HCT116 (cell line): ENCODE measurements at regions of chr16 and their contacts with region 1.

Region 1: GRCh38 chr16:69105489-69106361 is at the start of gene HAS3:
- DNase-seq: peak; percentile 69
- ATAC-seq: peak; percentile 72
- H3K4me3 ChIP-seq: peak within 1 kb of the TSS; percentile 81 to 90
- H3K27ac ChIP-seq: peak within 1 kb of the TSS; percentile 74
- H3K4me1 ChIP-seq: peaks cover 24 to 66% of the 10 kb centered on the region in 2 experiments
- H3K27me3 ChIP-seq: no peaks in the 10 kb centered on the region
- CTCF ChIP-seq: peak; percentile 35 to 88 (median 59); a peak in 5 of 6 replicates
- POLR2A ChIP-seq: no peak
- RAD21 ChIP-seq: peak; percentile 96
- total RNA-seq, gene HAS3: 140 TPM

Region 2: DNA sequence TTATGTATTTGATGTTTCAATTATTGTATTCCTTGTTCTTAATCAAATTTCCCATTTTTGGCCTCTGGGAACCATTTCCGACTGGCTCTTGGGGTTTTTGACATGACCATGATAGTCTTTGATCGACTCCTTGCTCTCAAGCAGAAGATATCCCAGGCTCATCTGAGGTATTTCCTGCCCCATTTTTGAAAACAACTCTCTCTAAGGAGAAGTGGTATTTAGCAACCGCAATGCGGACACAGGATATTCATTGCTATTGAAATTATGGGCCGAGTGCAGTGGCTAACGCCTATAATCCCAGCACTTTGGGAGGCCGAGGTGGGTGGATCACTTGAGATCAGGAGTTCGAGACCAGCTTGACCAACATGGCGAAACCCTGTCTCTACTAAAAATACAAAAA is 256.9 kb before region 1 on chr16:
- CTCF ChIA-PET with region 1: interaction called, 14 read pairs
- POLR2A ChIA-PET with region 1: no interaction called
- RAD21 ChIA-PET with region 1: no interaction called
- intact Hi-C with region 1: loop called (anchors 5 kb)
- DNase-seq: no peak
- ATAC-seq: no peak
- H3K4me3 ChIP-seq: no peak overlapping the region
- H3K27ac ChIP-seq: no peak overlapping the region
- H3K4me1 ChIP-seq: peaks cover 2 to 8% of the 10 kb centered on the region in 2 experiments; a peak in 2 of 4 replicates
- H3K27me3 ChIP-seq: no peaks in the 10 kb centered on the region
- CTCF ChIP-seq: no peak
- POLR2A ChIP-seq: no peak
- RAD21 ChIP-seq: no peak

Region 3: DNA sequence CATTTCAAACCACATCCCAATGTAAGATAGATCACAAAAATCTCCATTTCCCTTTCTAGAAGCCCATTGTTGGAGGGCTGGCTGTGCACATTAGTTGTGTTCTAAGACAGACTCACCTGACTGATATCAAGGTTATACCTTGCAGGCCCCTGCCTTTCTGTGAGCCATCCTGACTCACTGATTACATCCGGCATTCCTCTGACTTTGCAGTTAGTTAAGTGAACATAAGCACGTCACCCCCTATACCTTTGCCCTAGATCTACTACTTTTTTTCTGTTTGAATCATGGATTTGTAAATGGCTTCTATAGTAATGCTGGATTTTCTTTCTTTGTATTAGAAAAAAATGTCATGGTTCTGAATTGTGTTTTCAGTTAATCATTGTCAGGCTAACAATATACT is 184.1 kb before region 1 on chr16:
- CTCF ChIA-PET with region 1: no interaction called
- POLR2A ChIA-PET with region 1: interaction called, 5 read pairs
- RAD21 ChIA-PET with region 1: no interaction called
- intact Hi-C with region 1: loop called (anchors 5 kb)
- DNase-seq: peak; percentile 98
- ATAC-seq: peak; percentile 86
- H3K4me3 ChIP-seq: peak overlapping the region in 1 of 2 experiments; percentile 37; a peak in 1 of 4 replicates
- H3K27ac ChIP-seq: peak overlapping the region; percentile 89
- H3K4me1 ChIP-seq: peaks cover 42 to 61% of the 10 kb centered on the region in 2 experiments
- H3K27me3 ChIP-seq: no peaks in the 10 kb centered on the region
- CTCF ChIP-seq: no peak
- POLR2A ChIP-seq: no peak
- RAD21 ChIP-seq: peak; percentile 38

Region 4: DNA sequence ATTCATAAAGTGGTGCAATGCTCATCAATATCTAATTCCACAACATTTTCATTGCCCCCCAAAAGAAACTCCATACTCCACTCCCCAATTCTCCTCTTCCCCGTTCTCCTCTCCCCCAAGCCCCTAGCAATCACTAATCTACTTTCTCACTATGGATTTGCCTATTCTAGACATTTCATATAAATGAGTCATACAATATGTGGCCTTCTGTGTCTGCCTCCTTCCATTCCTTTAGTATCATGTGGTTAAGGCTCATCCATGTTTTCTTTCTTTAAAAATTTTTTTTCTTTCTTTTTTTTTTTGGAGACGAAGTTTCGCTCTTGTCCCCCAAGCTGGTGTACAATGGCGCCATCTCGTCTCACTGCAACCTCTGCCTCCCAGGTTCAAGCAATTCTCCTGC is 56.6 kb before region 1 on chr16:
- CTCF ChIA-PET with region 1: no interaction called
- POLR2A ChIA-PET with region 1: interaction called, 13 read pairs
- RAD21 ChIA-PET with region 1: interaction called, 3 to 4 read pairs
- intact Hi-C with region 1: no loop called
- DNase-seq: no peak
- ATAC-seq: peak; percentile 41; the same call in 1 of the 2 replicates
- H3K4me3 ChIP-seq: no peak overlapping the region
- H3K27ac ChIP-seq: no peak overlapping the region; the same call in 1 of the 2 replicates
- H3K4me1 ChIP-seq: peaks cover 42 to 65% of the 10 kb centered on the region in 2 experiments
- H3K27me3 ChIP-seq: no peaks in the 10 kb centered on the region
- CTCF ChIP-seq: no peak
- POLR2A ChIP-seq: no peak
- RAD21 ChIP-seq: no peak